Activated T-helper 1 cell treated with anti-CD3 and anti-CD28 coated beads, Interleukin-12 subunit alpha, Interleukin-12 subunit beta, Interleukin-2, Interleukin-4 antibody, amounts not matched to agents 30 ng/mL and 10 ng/mL and 1 ng/mL, durations not matched to agents 14 hours and 24 hours and 36 hours (primary cell): ENCODE measurements at regions of chr13 and their contacts with region 1.

Region 1: GRCh38 chr13:48303359-48304142 is at the start of gene RB1:
- DNase-seq: peak; percentile 88
- H3K4me3 Mint-ChIP-seq: peak within 1 kb of the TSS; percentile 99
- H3K27ac Mint-ChIP-seq: peak within 1 kb of the TSS; percentile 97
- H3K4me1 Mint-ChIP-seq: peaks cover 30% of the 10 kb centered on the region
- H3K27me3 Mint-ChIP-seq: no peaks in the 10 kb centered on the region
- total RNA-seq, gene RB1: 26.5 and 28.6 TPM in 2 replicates

Region 2: DNA sequence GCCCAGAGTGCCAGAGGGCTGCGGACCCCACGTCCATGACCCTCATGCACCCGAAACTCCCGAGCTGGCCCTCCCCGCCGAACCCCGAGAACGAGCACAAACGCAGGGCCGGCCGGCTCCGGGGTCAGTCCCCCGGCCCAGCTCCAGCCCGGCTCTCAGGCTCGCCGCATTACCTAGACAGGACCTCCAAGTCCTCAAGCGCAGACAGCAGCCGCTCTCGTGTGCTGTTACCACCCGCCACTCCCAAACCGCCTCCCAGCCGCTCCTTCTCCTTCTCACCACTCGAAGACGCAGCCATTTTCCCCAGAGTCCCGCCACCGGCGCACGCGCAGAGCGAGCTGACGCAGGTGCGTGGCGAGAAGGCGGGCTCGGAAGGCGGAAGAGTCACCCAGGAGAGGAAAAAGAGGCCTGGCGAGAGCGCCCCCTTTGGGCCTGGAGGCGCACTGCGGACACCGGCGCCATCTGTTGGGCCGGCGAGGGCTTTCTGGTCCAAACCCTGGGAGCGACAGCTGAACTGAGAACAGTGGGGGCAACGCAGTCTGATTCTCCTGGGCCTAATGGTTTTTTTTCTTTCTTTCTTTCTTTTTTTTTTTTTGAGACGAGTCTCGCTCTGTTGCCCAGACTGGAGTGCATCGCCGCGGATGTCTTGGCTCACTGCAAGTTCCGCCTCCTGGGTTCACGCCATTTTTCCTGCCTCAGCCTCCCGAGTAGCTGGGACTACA is 208.6 kb before region 1 on chr13 and contains the start of gene MED4:
- intact Hi-C with region 1: loop called (anchors 1 kb)
- DNase-seq: peak; percentile 98
- H3K4me3 Mint-ChIP-seq: peak within 1 kb of the TSS; percentile 98
- H3K27ac Mint-ChIP-seq: peak within 1 kb of the TSS; percentile 90
- H3K4me1 Mint-ChIP-seq: peaks cover 36% of the 10 kb centered on the region
- H3K27me3 Mint-ChIP-seq: peaks cover 5% of the 10 kb centered on the region
- total RNA-seq, gene MED4: 64.2 and 65.6 TPM in 2 replicates

Region 3: DNA sequence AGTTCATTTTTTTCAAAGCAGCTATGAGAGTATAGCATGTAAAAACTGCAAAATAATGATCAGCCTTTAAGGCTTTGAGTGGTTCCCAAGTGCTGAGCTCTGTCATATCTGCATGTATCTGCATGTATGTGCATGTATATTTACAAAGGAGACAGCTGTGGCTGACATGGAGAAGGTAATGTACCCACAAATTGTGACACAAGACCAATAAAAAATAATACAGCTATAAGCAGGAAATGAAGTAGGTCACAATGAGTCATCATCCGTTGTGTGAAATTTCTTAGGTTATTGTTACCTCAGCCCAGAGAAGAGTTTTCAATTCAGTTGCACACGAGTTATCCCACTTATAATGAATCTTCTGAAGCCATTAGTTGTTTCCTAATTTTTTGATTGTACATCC is 147.7 kb before region 1 on chr13:
- intact Hi-C with region 1: loop called (anchors 10 kb)
- DNase-seq: peak; percentile 9
- H3K4me3 Mint-ChIP-seq: no peak overlapping the region
- H3K27ac Mint-ChIP-seq: peak overlapping the region; percentile 30
- H3K4me1 Mint-ChIP-seq: peaks cover 73% of the 10 kb centered on the region
- H3K27me3 Mint-ChIP-seq: no peaks in the 10 kb centered on the region

Region 4: DNA sequence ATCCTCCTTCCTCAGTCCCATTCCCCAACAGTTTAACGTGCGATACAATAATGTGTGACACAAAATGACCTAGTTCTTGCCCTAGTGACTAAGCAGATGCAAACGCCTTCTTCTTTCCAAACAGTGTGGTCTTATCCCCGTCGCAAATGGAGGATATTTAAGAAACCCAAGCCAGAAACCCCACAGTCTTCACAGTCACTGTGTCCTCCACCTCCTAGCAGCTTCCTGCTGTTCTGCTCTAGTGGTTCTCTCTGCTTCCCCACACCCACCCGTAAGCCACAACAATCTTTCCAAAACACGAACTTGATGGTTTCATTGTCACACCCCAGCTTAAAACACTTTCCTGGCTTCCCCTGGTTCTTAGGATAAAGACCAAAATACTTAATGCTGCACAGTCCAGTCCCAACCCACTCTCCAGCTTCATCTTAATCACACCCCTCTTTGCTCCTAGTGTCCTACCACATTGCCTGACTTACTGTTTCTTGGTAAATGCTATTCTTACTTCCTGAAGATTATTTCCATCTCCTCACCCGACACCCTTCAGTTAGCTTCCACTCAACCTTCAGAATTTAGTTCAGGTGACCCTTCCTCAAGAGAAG is 38.2 kb before region 1 on chr13:
- intact Hi-C with region 1: loop called (anchors 1 kb)
- DNase-seq: peak; percentile 13
- H3K4me3 Mint-ChIP-seq: peak overlapping the region; percentile 8
- H3K27ac Mint-ChIP-seq: peak overlapping the region; percentile 40
- H3K4me1 Mint-ChIP-seq: peaks cover 24% of the 10 kb centered on the region
- H3K27me3 Mint-ChIP-seq: no peaks in the 10 kb centered on the region